ENCODE measurements at regions of chr7 and their contacts with region 1.

Region 1: GRCh38 chr7:158695726-158696452 is 8.7 kb downstream of the NCAPG2 start:
- DNase-seq: no peak
- H3K4me3 ChIP-seq: no peak overlapping the region
- H3K27me3 ChIP-seq: no peaks in the 10 kb centered on the region
- CTCF ChIP-seq: peak; percentile 72

Region 2: GRCh38 chr7:158685693-158686092 is 10.2 kb before region 1 on chr7:
- CTCF ChIA-PET with region 1: interaction called, 11 read pairs
- POLR2A ChIA-PET with region 1: no interaction called
- DNase-seq: no peak
- H3K4me3 ChIP-seq: no peak overlapping the region
- H3K27me3 ChIP-seq: no peaks in the 10 kb centered on the region
- CTCF ChIP-seq: no peak